ENCODE measurements at regions of chr6 and their contacts with region 1.

Region 1: GRCh38 chr6:169028343-169028742 is 225.3 kb downstream of the THBS2 start:
- DNase-seq: no peak
- ATAC-seq: no peak
- H3K4me3 ChIP-seq: no peak overlapping the region
- H3K27ac ChIP-seq: no peak overlapping the region
- H3K4me1 ChIP-seq: no peaks in the 10 kb centered on the region
- H3K27me3 ChIP-seq: peaks cover 1 to 13% of the 10 kb centered on the region in 2 experiments; a peak in 3 of 5 replicates
- CTCF ChIP-seq: no peak
- EP300 ChIP-seq: no peak
- POLR2A ChIP-seq: no peak
- RAD21 ChIP-seq: no peak

Region 2: GRCh38 chr6:169064194-169064593 is 35.9 kb after region 1 on chr6:
- CTCF ChIA-PET with region 1: no interaction called
- POLR2A ChIA-PET with region 1: no interaction called
- in situ Hi-C with region 1: no loop called
- intact Hi-C with region 1: no loop called
- DNase-seq: no peak
- ATAC-seq: no peak
- H3K4me3 ChIP-seq: no peak overlapping the region
- H3K27ac ChIP-seq: no peak overlapping the region
- H3K4me1 ChIP-seq: no peaks in the 10 kb centered on the region
- H3K27me3 ChIP-seq: peaks cover 1 to 16% of the 10 kb centered on the region in 2 experiments; a peak in 3 of 5 replicates
- CTCF ChIP-seq: no peak
- EP300 ChIP-seq: no peak
- POLR2A ChIP-seq: no peak
- RAD21 ChIP-seq: no peak

Region 3: GRCh38 chr6:169074526-169074925 is 46.2 kb after region 1 on chr6:
- CTCF ChIA-PET with region 1: no interaction called
- POLR2A ChIA-PET with region 1: no interaction called
- in situ Hi-C with region 1: no loop called
- intact Hi-C with region 1: loop called (anchors 1 kb)
- DNase-seq: no peak
- ATAC-seq: no peak
- H3K4me3 ChIP-seq: no peak overlapping the region
- H3K27ac ChIP-seq: no peak overlapping the region
- H3K4me1 ChIP-seq: no peaks in the 10 kb centered on the region
- H3K27me3 ChIP-seq: peaks cover 6 to 63% of the 10 kb centered on the region in 2 experiments
- CTCF ChIP-seq: no peak
- EP300 ChIP-seq: no peak
- POLR2A ChIP-seq: no peak
- RAD21 ChIP-seq: no peak

Region 4: DNA sequence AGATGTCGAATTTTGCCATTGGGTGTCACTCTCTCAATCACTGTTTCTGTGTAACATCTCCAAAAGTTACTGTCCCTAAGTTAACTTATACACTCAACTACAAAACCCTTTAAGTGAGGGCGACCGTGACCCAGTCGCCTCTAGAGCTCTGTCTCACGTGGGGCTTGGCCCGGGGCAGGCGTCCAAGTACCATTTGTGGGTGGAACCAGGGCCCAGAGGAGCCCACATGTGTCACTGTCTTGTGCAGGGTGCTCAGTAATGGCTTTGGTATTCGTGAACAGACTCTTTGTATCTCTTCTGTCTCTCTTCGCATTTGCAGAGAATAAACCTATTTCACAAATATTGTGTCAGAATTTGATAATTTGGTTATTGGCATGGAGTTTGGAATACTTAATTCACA is 335.2 kb after region 1 on chr6:
- CTCF ChIA-PET with region 1: no interaction called
- POLR2A ChIA-PET with region 1: no interaction called
- in situ Hi-C with region 1: no loop called
- intact Hi-C with region 1: no loop called
- DNase-seq: no peak
- ATAC-seq: no peak
- H3K4me3 ChIP-seq: no peak overlapping the region
- H3K27ac ChIP-seq: no peak overlapping the region
- H3K4me1 ChIP-seq: no peaks in the 10 kb centered on the region
- H3K27me3 ChIP-seq: peaks cover 0 to 12% of the 10 kb centered on the region in 2 experiments; a peak in 3 of 5 replicates
- CTCF ChIP-seq: no peak
- EP300 ChIP-seq: no peak
- POLR2A ChIP-seq: no peak
- RAD21 ChIP-seq: no peak